ENCODE measurements at regions of chr9 and their contacts with region 1.

Region 1: DNA sequence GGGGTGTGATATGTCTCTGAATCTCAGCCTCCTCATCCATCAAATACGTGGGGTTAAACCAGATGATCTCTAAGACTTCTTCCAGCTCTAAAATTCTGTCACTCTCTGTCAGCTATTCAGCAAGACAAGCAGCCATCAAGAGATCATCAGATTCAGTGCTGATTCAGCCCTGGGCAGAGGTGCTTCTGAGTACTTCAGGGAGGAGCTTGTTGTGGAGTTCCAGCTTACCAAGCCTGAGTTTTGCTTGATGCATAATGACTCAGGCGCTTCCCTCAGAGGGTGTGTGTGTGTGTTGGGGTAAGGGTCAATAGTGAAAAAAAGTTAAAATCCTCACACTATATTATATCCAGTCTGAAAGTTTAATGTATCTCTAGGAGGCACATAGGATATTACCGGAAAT is 29.6 kb upstream of the TAF1L start:
- DNase-seq: peak; percentile 85
- H3K4me3 Mint-ChIP-seq: no peak overlapping the region
- H3K27ac Mint-ChIP-seq: peak overlapping the region; percentile 46
- H3K4me1 Mint-ChIP-seq: peaks cover 26% of the 10 kb centered on the region
- H3K27me3 Mint-ChIP-seq: no peaks in the 10 kb centered on the region
- CTCF ChIP-seq: no peak

Region 2: GRCh38 chr9:32603914-32604741 is 61.0 kb before region 1 on chr9:
- CTCF ChIA-PET with region 1: no interaction called
- POLR2A ChIA-PET with region 1: interaction called, 11 read pairs
- intact Hi-C with region 1: no loop called
- DNase-seq: peak; percentile 93
- H3K4me3 Mint-ChIP-seq: peak overlapping the region; percentile 24
- H3K27ac Mint-ChIP-seq: peak overlapping the region; percentile 11
- H3K4me1 Mint-ChIP-seq: peaks cover 8% of the 10 kb centered on the region
- H3K27me3 Mint-ChIP-seq: no peaks in the 10 kb centered on the region
- CTCF ChIP-seq: no peak

Region 3: GRCh38 chr9:32644698-32645097 is 20.4 kb before region 1 on chr9:
- CTCF ChIA-PET with region 1: no interaction called
- POLR2A ChIA-PET with region 1: interaction called, 12 read pairs
- intact Hi-C with region 1: no loop called
- DNase-seq: peak; percentile 98
- H3K4me3 Mint-ChIP-seq: no peak overlapping the region
- H3K27ac Mint-ChIP-seq: peak overlapping the region; percentile 92
- H3K4me1 Mint-ChIP-seq: peaks cover 11% of the 10 kb centered on the region
- H3K27me3 Mint-ChIP-seq: no peaks in the 10 kb centered on the region
- CTCF ChIP-seq: no peak

Measured in MCF 10A (cell line).